ENCODE measurements at regions of chr3 and their contacts with region 1.

Region 1: DNA sequence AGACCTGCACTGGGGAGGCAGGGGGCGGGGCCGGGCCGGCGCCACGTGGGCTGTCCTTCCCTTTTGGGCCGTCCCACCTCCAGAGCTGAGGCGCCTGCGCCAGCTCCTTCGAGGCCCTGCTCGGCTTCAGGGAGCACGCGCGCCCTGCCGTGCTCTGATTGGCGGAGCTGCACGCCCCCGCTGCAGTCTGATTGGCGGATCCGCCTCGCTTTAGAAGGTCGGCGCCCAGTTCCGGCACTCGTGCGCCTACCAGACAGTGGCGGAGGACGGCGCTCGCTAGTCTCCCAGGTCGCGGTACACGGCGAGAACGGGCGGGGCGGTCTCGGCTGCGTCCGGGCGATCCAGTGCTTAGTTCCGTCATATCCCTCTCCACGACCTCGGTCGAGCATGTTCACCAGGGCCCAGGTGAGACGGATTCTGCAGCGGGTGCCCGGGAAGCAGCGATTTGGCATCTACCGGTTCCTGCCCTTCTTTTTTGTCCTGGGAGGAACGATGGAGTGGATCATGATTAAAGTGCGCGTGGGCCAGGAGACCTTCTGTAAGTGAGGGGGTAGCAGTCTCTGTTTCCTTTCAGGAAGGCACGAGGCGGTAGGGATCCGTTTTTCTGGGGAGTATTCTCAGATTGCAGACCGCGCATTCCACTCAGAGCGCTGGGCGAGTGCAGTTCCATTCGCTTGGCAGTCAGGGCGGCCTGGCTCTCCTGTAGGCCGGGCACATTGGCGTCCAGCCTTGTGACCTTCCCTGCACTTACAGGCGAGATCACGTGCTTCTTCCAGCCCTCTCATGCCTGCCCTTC is at the start of gene UQCC5:
- DNase-seq: peak; percentile 98
- H3K4me3 ChIP-seq: peak within 1 kb of the TSS; percentile 82
- H3K4me3 Mint-ChIP-seq: peak within 1 kb of the TSS; percentile 98
- H3K27ac Mint-ChIP-seq: peak within 1 kb of the TSS; percentile 97
- H3K4me1 ChIP-seq: peaks cover 28% of the 10 kb centered on the region; the same call in 1 of the 2 replicates
- H3K4me1 Mint-ChIP-seq: peaks cover 32% of the 10 kb centered on the region
- H3K27me3 ChIP-seq: no peaks in the 10 kb centered on the region
- H3K27me3 Mint-ChIP-seq: no peaks in the 10 kb centered on the region
- CTCF ChIP-seq: no peak
- total RNA-seq, gene UQCC5: 35.0 and 38.6 TPM in 2 replicates

Region 2: GRCh38 chr3:52313774-52314188 is 222.8 kb before region 1 on chr3:
- CTCF ChIA-PET with region 1: no interaction called
- POLR2A ChIA-PET with region 1: no interaction called
- intact Hi-C with region 1: no loop called
- DNase-seq: no peak
- H3K4me3 ChIP-seq: no peak overlapping the region
- H3K4me3 Mint-ChIP-seq: no peak overlapping the region
- H3K27ac Mint-ChIP-seq: no peak overlapping the region
- H3K4me1 ChIP-seq: peaks cover 17% of the 10 kb centered on the region
- H3K4me1 Mint-ChIP-seq: peaks cover 7% of the 10 kb centered on the region
- H3K27me3 ChIP-seq: no peaks in the 10 kb centered on the region
- H3K27me3 Mint-ChIP-seq: no peaks in the 10 kb centered on the region
- CTCF ChIP-seq: no peak

Region 3: DNA sequence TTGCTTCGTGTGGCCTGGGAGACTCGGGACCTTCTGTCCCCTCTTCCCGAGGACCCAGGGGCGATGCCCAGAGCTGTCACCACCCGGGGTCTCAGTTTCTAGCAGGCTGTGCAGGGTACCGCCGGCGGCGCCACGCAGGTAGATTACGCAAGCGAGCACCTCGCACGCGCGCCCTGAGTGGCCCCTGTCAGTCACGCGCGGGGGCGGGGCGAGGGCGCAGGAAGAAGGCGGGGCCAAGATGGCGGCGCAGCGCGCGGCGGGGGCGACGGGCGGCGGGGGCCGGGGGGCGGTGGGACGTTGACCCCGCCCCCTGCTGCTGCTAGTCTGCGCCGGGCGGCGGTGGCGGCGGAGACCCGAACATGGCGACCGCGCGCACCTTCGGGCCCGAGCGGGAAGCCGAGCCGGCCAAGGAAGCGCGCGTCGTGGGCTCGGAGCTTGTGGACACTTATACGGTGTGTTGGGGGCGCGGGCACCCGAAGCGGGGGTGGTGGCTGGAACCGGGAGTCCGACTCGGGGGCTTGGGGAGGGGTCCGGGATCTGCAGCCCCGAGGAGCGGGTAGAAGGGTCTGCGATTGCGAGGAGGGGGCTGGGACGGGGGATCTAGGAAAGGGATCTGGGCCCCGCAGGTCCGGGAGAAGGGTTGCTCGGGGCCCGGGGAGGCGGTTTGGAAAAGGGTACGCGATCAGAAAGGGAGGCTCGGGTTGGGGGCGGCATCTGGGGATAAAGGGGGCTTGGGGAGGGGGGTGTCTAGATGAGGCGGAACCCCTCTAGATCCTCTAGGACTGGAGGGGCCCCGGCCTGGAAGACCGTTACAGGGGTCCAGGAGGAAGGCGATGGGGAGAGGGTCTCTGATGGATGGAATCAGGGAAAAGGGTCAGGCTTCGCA is 81.0 kb before region 1 on chr3 and contains the start of gene NISCH:
- CTCF ChIA-PET with region 1: no interaction called
- POLR2A ChIA-PET with region 1: interaction called, 11 read pairs
- intact Hi-C with region 1: loop called (anchors 10 kb)
- DNase-seq: peak; percentile 90 to 97
- H3K4me3 ChIP-seq: peak within 1 kb of the TSS; percentile 94
- H3K4me3 Mint-ChIP-seq: peak within 1 kb of the TSS; percentile 88
- H3K27ac Mint-ChIP-seq: peak within 1 kb of the TSS; percentile 84
- H3K4me1 ChIP-seq: peaks cover 59% of the 10 kb centered on the region
- H3K4me1 Mint-ChIP-seq: peaks cover 41% of the 10 kb centered on the region
- H3K27me3 ChIP-seq: no peaks in the 10 kb centered on the region
- H3K27me3 Mint-ChIP-seq: no peaks in the 10 kb centered on the region
- CTCF ChIP-seq: no peak
- total RNA-seq, gene NISCH: 61.1 and 62.2 TPM in 2 replicates

Region 4: GRCh38 chr3:52518720-52519444 is 17.7 kb before region 1 on chr3:
- CTCF ChIA-PET with region 1: interaction called, 3 read pairs
- POLR2A ChIA-PET with region 1: interaction called, 4 read pairs
- intact Hi-C with region 1: loop called (anchors 1 kb)
- DNase-seq: peak; percentile 67 to 77
- H3K4me3 ChIP-seq: peak overlapping the region; percentile 34
- H3K4me3 Mint-ChIP-seq: peak overlapping the region; percentile 58
- H3K27ac Mint-ChIP-seq: no peak overlapping the region
- H3K4me1 ChIP-seq: no peaks in the 10 kb centered on the region
- H3K4me1 Mint-ChIP-seq: no peaks in the 10 kb centered on the region
- H3K27me3 ChIP-seq: no peaks in the 10 kb centered on the region
- H3K27me3 Mint-ChIP-seq: no peaks in the 10 kb centered on the region
- CTCF ChIP-seq: no peak

Region 5: DNA sequence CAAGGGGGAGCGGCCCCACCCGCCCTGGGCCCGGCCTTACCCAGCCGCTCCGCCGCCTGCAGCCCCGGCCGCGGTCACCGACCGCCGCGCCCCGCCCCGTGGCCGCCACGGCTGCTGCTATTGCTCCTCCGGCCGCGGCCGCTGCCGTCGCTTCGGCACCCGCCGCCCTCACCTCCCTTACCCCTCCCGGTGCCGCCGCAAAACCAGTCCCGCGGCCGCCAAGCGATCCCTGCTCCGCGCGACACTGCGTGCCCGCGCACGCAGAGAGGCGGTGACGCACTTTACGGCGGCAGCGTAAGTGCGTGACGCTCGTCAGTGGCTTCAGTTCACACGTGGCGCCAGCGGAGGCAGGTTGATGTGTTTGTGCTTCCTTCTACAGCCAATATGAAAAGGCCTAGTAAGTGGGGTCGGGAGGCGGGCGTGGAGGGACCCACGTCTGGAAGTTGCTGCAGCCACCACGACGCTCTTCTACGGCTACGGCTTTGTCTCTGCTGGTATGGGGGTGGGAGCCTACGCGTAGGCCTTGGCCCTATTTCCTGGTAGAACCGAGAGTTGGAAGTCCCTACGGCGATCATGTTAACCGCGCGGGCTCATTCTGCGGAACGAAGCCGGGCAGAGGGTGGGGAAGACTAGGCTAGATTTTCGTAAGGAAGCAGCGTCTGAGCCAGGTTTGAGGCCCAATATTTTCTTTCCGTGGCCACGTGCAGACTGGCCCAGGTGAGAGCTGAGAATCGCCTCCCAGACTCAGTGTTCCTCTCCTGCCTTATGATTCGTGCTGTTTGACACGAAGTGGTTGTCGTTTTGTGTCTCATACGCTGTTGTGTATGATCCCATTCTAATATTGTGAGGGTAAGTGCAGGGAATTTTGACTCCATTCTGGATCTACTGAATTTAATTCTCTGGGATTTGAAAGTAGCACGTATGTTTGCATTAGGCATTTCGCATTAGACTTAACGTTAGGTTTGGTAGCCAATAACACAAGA is 149.4 kb after region 1 on chr3 and contains the starts of genes GNL3 and PBRM1:
- CTCF ChIA-PET with region 1: interaction called, 4 read pairs
- POLR2A ChIA-PET with region 1: no interaction called
- intact Hi-C with region 1: loop called (anchors 10 kb)
- DNase-seq: peak; percentile 94 to 95
- H3K4me3 ChIP-seq: peak within 1 kb of the TSS; percentile 98
- H3K4me3 Mint-ChIP-seq: peak within 1 kb of the TSS; percentile 85
- H3K27ac Mint-ChIP-seq: peak within 1 kb of the TSS; percentile 96
- H3K4me1 ChIP-seq: peaks cover 41% of the 10 kb centered on the region
- H3K4me1 Mint-ChIP-seq: peaks cover 19% of the 10 kb centered on the region
- H3K27me3 ChIP-seq: no peaks in the 10 kb centered on the region
- H3K27me3 Mint-ChIP-seq: no peaks in the 10 kb centered on the region
- CTCF ChIP-seq: no peak
- total RNA-seq, gene GNL3: 125 and 134 TPM in 2 replicates
- total RNA-seq, gene PBRM1: 50.6 and 50.7 TPM in 2 replicates

Measured in Caco-2 (cell line).